AG04449 (cell line): ENCODE measurements at regions of chr2 and their contacts with region 1.

Region 1: GRCh38 chr2:188369365-188369764 is 77.7 kb downstream of the GULP1 start:
- DNase-seq: no peak
- H3K4me3 ChIP-seq: no peak overlapping the region
- CTCF ChIP-seq: peak; percentile 68

Region 2: DNA sequence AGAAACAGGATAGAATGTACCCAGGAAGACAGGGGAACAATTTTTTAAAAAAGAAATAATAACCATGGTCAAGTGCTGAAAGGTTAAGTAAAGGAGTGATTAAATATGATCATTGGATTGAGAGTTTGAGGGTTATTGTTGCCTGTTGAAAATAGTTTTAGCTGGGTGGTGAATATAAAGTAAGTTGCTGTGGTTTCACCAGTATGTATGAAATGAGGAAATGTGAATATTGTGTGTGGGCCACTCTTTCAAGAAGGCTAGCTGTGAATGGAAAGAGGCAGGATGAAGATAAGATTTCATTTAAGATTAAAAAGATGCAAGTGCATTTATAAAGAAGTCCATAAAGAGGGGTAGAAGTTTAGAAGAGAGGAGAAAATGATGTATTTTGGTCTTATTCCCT is 23.9 kb before region 1 on chr2:
- CTCF ChIA-PET with region 1: interaction called, 11 read pairs
- POLR2A ChIA-PET with region 1: no interaction called
- DNase-seq: no peak
- H3K4me3 ChIP-seq: no peak overlapping the region
- CTCF ChIP-seq: no peak